Activated CD4-positive, alpha-beta memory T cell treated with anti-CD3 and anti-CD28 coated beads for 36 hours (primary cell): ENCODE measurements at regions of chr3 and their contacts with region 1.

Region 1: DNA sequence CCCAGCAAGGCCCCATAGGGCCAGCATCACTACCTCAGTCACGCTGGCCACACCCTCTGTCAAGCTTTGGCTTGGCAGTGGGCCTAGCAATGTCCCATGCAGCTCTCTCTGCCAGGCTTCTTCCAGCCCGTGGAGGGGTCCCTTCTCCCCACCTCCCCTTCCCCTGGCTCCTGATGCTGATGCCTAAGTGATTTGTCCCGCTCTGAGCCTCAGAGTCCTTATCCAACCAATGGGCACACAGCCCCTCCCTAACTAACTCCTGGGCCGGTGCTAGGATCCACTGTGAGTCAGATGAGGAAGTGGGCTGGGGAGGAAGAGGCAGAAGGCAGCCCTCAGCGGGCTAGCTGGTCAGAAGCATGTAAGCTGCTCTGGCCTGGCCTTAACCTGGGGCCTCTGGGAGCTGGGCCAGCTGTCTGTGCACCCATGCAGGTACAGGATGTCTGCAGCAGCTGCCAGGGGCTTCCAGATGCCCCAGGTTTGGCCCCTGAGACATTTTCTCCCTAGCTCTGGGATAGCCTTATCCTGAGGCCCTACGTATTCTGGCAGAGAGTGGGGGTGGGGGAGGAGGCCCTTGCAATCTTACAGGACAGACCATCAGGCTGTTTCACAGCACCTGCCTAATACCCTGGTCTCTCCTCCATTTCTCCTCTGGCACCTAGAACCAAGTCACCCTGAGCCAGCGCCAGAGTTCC is 740 bp upstream of the ZBTB47 start:
- DNase-seq: no peak
- H3K4me3 Mint-ChIP-seq: peak overlapping the region; percentile 45
- H3K27ac Mint-ChIP-seq: no peak overlapping the region
- H3K4me1 Mint-ChIP-seq: peaks cover 11% of the 10 kb centered on the region
- H3K27me3 Mint-ChIP-seq: no peaks in the 10 kb centered on the region

Region 2: DNA sequence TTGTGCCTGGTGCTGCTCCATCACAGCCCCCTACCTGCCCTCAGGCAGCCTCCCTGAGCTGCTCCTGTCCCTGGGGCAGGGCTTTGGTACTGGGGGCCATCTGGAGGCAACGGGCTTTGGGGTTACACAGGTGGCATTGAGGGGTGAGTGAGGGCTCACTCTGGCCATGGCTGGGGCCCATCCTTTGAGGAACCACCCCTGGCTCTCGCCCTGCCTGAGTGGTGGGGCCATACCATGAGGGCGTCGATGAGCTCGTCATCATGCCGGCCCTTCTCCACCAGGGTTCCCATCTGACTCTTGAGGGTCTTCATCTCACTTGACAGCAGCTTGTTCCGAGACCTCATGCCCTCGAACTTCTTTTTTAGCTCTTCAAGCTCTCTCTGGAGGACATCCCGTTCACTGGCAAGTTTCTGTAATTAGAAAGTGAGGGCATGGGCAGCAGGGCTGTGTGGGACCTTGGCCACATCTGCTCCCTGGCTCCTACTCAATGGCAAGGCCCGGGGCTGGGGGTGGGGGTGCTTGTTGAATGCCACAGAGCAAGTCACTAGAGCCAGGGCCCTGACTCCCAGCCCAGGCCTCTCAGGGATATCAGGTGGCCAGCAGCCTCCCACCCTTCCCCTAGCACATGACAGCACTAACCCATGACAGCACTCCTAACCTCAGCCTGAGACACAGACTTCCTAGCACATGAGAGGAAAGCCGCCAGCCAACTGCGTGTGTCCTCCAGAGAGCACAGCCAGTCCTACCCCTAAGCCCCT is 86.8 kb after region 1 on chr3:
- CTCF ChIA-PET with region 1: interaction called, 4 read pairs
- POLR2A ChIA-PET with region 1: no interaction called
- intact Hi-C with region 1: loop called (anchors 5 kb)
- DNase-seq: no peak
- H3K4me3 Mint-ChIP-seq: no peak overlapping the region
- H3K27ac Mint-ChIP-seq: no peak overlapping the region
- H3K4me1 Mint-ChIP-seq: peaks cover 4% of the 10 kb centered on the region
- H3K27me3 Mint-ChIP-seq: no peaks in the 10 kb centered on the region